Sciatic nerve (tissue), 2 donors: ENCODE measurements at regions of chr13 and their contacts with region 1.

Region 1: DNA sequence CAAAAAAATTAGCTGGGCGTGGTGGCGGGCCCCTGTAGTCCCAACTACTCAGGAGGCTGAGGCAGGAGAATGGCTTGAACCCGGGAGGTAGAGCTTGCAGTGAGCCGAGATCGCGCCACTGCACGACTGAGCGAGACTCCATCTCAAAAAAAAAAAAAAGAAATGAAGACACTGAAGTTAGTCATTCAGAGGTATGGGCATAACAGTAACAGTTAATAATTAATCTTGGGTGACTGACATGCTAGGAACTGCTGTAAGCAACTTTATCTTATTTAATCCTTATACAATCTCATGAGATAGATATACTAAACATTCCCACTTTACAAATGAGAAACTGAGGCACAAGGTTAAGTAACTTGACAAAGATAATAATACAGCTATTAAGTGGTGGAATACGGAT is 4.9 kb downstream of the SKA3 start:
- DNase-seq: no peak
- ATAC-seq: no peak

Region 2: DNA sequence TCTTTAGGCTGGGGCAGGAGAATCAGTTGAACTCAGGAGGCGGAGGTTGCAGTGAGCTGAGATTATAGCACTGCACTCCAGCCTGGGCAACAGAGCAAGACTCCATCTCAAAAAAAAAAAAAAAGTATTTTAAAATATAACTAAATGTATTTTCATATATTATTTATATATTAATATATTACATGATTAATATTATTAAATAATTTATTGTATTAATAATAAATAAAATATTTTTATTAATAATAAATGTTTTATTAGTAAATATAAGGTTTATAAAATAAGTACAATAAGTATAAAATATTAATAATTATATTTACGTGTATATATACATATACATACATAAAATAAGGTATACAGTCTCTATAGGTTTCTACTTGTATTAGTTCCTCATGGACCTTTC is 51.9 kb before region 1 on chr13:
- intact Hi-C with region 1: loop called (anchors 2 kb)
- DNase-seq: no peak
- ATAC-seq: no peak

Region 3: GRCh38 chr13:21426238-21426637 is 254.8 kb after region 1 on chr13:
- intact Hi-C with region 1: no loop called
- DNase-seq: no peak
- ATAC-seq: no peak